H1 (cell line): ENCODE measurements at regions of chr3 and their contacts with region 1.

Region 1: GRCh38 chr3:114393367-114394072 is 99.7 kb downstream of the TIGIT start:
- DNase-seq: no peak
- H3K4me3 ChIP-seq: no peak overlapping the region
- H3K27ac ChIP-seq: no peak overlapping the region
- H3K4me1 ChIP-seq: no peaks in the 10 kb centered on the region
- H3K27me3 ChIP-seq: no peaks in the 10 kb centered on the region
- CTCF ChIP-seq: no peak
- EP300 ChIP-seq: no peak
- POLR2A ChIP-seq: no peak
- RAD21 ChIP-seq: no peak

Region 2: GRCh38 chr3:114405202-114405990 is 11.9 kb after region 1 on chr3:
- CTCF ChIA-PET with region 1: interaction called, 13 read pairs
- POLR2A ChIA-PET with region 1: interaction called, 4 read pairs
- DNase-seq: no peak
- H3K4me3 ChIP-seq: no peak overlapping the region
- H3K27ac ChIP-seq: no peak overlapping the region
- H3K4me1 ChIP-seq: peaks cover 1 to 12% (median 3%) of the 10 kb centered on the region in 4 experiments; a peak in 5 of 7 replicates
- H3K27me3 ChIP-seq: no peaks in the 10 kb centered on the region
- CTCF ChIP-seq: no peak
- EP300 ChIP-seq: no peak
- POLR2A ChIP-seq: no peak
- RAD21 ChIP-seq: no peak